ENCODE measurements at regions of chr20 and their contacts with region 1.

Region 1: GRCh38 chr20:44966030-44966961 is at the start of gene STK4:
- DNase-seq: peak; percentile 98
- H3K4me3 ChIP-seq: peak within 1 kb of the TSS; percentile 89
- H3K27ac ChIP-seq: peak within 1 kb of the TSS; percentile 82
- H3K4me1 ChIP-seq: peaks cover 69% of the 10 kb centered on the region
- CTCF ChIP-seq: peak; percentile 74
- total RNA-seq, gene STK4: 67.9 and 80.4 TPM in 2 replicates

Region 2: DNA sequence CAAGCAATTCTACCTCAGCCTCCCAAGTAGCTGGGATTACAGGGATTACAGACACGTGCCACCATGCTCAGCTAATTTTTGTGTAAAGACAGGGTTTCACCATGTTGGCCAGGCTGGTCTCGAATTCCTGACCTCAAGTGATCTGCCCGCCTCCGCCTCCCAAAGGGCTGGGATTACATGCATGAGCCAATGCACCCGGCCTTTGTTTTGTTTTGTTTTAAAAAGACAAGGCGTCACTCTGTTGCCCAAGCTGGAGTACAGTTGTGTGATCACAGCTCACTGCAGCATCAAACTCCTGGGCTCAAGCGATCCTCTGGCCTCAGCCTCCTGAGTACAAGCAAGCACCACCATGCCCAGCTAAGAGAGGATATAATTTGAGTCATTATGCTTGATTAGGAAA is 449.8 kb before region 1 on chr20:
- CTCF ChIA-PET with region 1: no interaction called
- POLR2A ChIA-PET with region 1: no interaction called
- intact Hi-C with region 1: no loop called
- DNase-seq: no peak
- H3K4me3 ChIP-seq: no peak overlapping the region
- H3K27ac ChIP-seq: no peak overlapping the region
- H3K4me1 ChIP-seq: peaks cover 22% of the 10 kb centered on the region
- CTCF ChIP-seq: no peak

Region 3: GRCh38 chr20:44582311-44583025 is 383.8 kb before region 1 on chr20 and contains the start of gene PKIG:
- CTCF ChIA-PET with region 1: no interaction called
- POLR2A ChIA-PET with region 1: interaction called, 3 read pairs
- intact Hi-C with region 1: loop called (anchors 10 kb)
- DNase-seq: peak; percentile 48
- H3K4me3 ChIP-seq: peak within 1 kb of the TSS; percentile 72
- H3K27ac ChIP-seq: peak within 1 kb of the TSS; percentile 98
- H3K4me1 ChIP-seq: peaks cover 80% of the 10 kb centered on the region
- CTCF ChIP-seq: no peak
- total RNA-seq, gene PKIG: 37.2 and 46.9 TPM in 2 replicates

Region 4: GRCh38 chr20:44885392-44886265 is 80.7 kb before region 1 on chr20 and contains the start of gene YWHAB:
- CTCF ChIA-PET with region 1: no interaction called
- POLR2A ChIA-PET with region 1: interaction called, 3 read pairs
- intact Hi-C with region 1: loop called (anchors 5 kb)
- DNase-seq: peak; percentile 98
- H3K4me3 ChIP-seq: peak within 1 kb of the TSS; percentile 92
- H3K27ac ChIP-seq: peak within 1 kb of the TSS; percentile 78
- H3K4me1 ChIP-seq: peaks cover 42% of the 10 kb centered on the region
- CTCF ChIP-seq: peak; percentile 21; the same call in 1 of the 2 replicates
- total RNA-seq, gene YWHAB: 60.5 and 72.8 TPM in 2 replicates

Region 5: DNA sequence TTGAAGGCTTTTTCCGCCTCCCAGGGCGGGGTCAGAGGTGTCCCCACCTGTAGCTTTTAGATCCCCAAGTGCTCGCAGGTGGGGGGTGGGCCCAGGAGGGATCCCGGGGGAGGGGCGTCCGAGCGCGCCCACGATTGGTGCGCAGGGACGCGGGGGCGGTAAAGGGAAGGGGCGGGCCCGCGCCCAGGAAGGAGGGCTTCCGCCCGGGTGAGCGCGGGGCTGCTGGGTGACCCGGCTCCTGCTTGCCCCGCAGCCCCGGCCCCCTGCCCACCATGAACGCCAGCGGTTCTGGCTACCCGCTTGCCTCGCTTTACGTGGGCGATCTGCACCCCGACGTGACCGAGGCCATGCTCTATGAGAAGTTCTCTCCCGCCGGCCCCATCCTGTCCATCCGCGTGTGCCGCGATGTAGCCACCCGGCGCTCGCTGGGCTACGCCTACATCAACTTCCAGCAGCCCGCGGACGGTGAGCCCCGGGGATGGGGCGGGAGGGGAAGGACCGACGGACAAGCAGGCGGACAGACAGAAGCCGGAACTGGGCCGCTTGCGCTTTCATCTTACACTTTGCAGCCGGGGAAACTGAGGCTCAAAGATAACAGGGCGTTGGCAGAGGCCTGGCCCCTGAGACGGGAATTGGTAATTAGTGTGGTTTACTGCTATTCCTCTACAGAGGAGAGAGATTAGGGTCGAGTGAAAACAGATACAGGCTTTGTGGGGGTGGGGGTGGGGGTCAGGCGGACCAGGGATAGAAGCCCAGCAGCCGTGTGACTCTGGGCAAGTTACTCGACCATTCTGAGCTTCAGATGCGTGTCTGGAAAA is 56.2 kb before region 1 on chr20 and contains the start of gene PABPC1L:
- CTCF ChIA-PET with region 1: interaction called, 3 read pairs
- POLR2A ChIA-PET with region 1: interaction called, 3 read pairs
- intact Hi-C with region 1: loop called (anchors 2 kb)
- DNase-seq: peak; percentile 90
- H3K4me3 ChIP-seq: peak within 1 kb of the TSS; percentile 74
- H3K27ac ChIP-seq: peak within 1 kb of the TSS; percentile 51
- H3K4me1 ChIP-seq: peaks cover 25% of the 10 kb centered on the region
- CTCF ChIP-seq: no peak
- total RNA-seq, gene PABPC1L: 48.8 and 58.7 TPM in 2 replicates

Region 6: GRCh38 chr20:44979090-44979621 is 12.9 kb after region 1 on chr20:
- CTCF ChIA-PET with region 1: interaction called, 7 read pairs
- POLR2A ChIA-PET with region 1: interaction called, 31 read pairs
- intact Hi-C with region 1: no loop called
- DNase-seq: peak; percentile 86
- H3K4me3 ChIP-seq: peak overlapping the region; percentile 51
- H3K27ac ChIP-seq: peak overlapping the region; percentile 92
- H3K4me1 ChIP-seq: peaks cover 31% of the 10 kb centered on the region
- CTCF ChIP-seq: no peak

Region 7: GRCh38 chr20:45061244-45061643 is 94.9 kb after region 1 on chr20:
- CTCF ChIA-PET with region 1: no interaction called
- POLR2A ChIA-PET with region 1: no interaction called
- intact Hi-C with region 1: no loop called
- DNase-seq: no peak
- H3K4me3 ChIP-seq: no peak overlapping the region
- H3K27ac ChIP-seq: no peak overlapping the region
- H3K4me1 ChIP-seq: peaks cover 7% of the 10 kb centered on the region
- CTCF ChIP-seq: no peak